Activated CD8-positive, alpha-beta T cell treated with anti-CD3 and anti-CD28 coated beads, Interleukin-2, amount 10 ng/mL, durations not matched to agents 7 days and 5 days (primary cell): ENCODE measurements at regions of chr2 and their contacts with region 1.

Region 1: GRCh38 chr2:96960153-96960961 is 26.0 kb downstream of the FAM178B start:
- DNase-seq: peak; percentile 92
- ATAC-seq: peak; percentile 60
- H3K4me3 Mint-ChIP-seq: peak overlapping the region; percentile 43
- H3K27ac Mint-ChIP-seq: peak overlapping the region; percentile 98
- H3K4me1 Mint-ChIP-seq: peaks cover 59% of the 10 kb centered on the region
- H3K27me3 Mint-ChIP-seq: peaks cover 2% of the 10 kb centered on the region

Region 2: DNA sequence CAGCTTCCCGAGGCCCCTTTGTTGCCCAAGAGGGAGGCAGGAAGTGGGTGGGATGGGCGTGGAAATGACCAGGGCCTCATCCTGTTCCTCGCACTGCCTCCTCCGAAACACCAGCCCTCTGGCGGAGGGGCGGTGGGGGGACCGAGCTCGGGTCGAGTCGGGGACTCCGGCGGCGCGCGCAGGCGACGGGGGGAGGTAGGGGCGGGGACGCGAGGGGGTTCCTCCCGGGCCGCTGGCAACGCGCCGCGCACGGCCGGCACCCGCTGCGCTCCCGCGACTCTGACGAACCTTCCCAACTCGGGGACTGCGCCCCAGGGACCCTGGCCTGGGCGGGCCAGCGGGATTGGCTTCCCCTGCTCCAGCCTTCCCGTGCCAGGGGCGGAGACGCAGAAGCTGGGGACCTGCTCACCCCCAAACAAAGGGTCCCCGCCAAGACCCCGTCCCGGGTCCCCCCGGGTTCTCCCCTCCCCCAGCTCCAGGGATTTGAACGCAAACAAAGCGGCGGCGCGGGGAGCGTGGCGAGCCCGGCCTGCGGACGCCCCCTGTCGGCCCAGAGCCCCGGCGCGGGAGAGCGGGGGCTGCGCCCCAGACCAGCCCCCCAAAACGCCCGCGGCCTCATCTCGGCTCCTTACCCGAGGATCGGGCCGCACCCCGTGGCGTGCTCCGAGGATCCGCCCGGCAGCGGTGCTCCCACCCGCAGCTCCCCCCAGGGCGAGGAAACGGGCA is 91.6 kb before region 1 on chr2:
- CTCF ChIA-PET with region 1: interaction called, 16 read pairs
- POLR2A ChIA-PET with region 1: interaction called, 4 read pairs
- DNase-seq: peak; percentile 80
- ATAC-seq: peak; percentile 47
- H3K4me3 Mint-ChIP-seq: peak overlapping the region; percentile 78
- H3K27ac Mint-ChIP-seq: peak overlapping the region; percentile 86
- H3K4me1 Mint-ChIP-seq: peaks cover 40% of the 10 kb centered on the region
- H3K27me3 Mint-ChIP-seq: peaks cover 4% of the 10 kb centered on the region

Region 3: GRCh38 chr2:96891491-96892333 is 68.6 kb before region 1 on chr2:
- CTCF ChIA-PET with region 1: no interaction called
- POLR2A ChIA-PET with region 1: no interaction called
- DNase-seq: peak; percentile 46
- ATAC-seq: peak; percentile 66
- H3K4me3 Mint-ChIP-seq: no peak overlapping the region
- H3K27ac Mint-ChIP-seq: peak overlapping the region; percentile 25
- H3K4me1 Mint-ChIP-seq: peaks cover 29% of the 10 kb centered on the region
- H3K27me3 Mint-ChIP-seq: no peaks in the 10 kb centered on the region